Endothelial cell of umbilical vein (primary cell): ENCODE measurements at regions of chr4 and their contacts with region 1.

Region 1: DNA sequence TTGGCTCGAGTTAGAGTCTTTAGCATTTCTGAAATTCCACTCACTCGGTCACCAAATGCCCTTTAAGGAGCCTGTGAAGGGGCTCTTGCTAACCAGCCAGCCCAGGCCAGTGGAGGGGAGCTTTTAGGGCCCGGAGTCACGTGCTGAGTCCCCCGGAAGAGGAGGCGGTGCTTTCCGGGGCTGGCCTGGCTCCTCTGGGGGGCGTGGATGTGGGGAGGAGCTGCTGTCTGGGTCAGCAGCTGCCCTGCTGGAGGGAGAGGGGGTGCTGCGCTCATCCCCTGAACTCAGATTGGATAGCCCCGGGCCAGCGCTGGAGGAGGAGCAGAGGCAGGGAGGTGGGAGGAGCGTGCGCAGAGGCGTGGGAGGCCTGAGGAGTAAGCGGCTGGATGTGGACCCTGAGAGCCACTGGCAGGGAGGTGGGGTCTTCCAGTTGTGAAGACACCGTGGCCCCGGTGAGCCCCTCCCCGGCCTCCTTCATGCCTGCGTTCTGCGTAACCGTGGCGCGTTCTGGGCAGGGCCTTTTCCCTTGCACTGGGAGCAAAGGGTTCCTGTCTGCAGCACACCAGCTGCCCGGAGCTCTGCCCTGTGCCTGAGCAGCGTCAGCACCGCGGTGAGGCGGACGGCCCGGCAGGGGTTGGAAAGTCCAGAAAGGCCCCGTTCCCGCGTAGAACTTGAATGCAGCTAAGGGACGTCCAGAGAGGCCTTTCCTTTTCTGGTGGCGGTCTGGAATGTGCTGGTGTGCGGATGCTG is 19.7 kb downstream of the MAEA start:
- DNase-seq: peak; percentile 82
- H3K4me3 ChIP-seq: peak overlapping the region in 1 of 3 experiments; percentile 42
- H3K27ac ChIP-seq: no peak overlapping the region
- H3K4me1 ChIP-seq: peaks cover 11% of the 10 kb centered on the region
- H3K27me3 ChIP-seq: no peaks in the 10 kb centered on the region
- CTCF ChIP-seq: no peak
- POLR2A ChIP-seq: no peak

Region 2: DNA sequence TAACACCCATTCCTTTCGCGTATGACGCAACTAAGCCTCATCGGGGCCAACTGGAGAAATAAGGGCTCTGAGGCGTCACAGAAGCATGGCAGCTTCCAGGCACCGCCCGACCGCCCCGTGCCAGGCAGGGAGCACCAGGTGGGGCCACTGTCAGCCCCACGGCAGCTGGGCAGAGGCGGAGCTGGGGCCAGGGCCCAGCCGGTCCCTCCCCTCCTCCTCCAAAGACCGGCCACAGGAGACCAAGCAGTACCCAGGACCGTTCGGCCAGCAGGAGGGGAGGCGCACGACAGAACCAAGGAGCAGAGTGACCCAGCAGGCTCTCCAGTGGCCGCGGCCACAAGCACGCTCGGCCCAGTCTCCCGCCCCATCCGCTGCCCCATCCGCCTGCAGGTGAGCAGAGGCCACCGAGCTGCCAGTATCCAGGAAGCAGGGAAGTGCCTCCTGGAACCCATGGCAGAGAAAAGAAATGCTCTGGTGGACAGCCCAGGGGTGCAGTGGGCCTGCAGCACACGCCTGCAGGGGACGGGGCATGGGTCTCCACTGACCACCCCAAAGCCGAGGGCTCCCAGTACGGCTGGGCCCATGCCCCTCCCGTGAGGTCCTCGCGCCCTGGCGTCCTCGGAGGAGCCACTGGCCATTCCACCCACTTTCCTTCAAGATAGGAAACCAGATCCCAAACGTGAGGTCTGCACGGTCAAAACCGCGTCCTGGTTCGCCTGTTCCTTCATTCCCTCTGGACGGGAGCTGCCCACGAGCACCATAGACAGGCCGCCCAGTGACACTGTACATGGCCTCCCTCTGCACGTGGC is 70.1 kb before region 1 on chr4:
- CTCF ChIA-PET with region 1: no interaction called
- POLR2A ChIA-PET with region 1: no interaction called
- dilution Hi-C with region 1: no loop called
- intact Hi-C with region 1: loop called (anchors 5 kb)
- DNase-seq: no peak
- H3K4me3 ChIP-seq: no peak overlapping the region
- H3K27ac ChIP-seq: no peak overlapping the region
- H3K4me1 ChIP-seq: peaks cover 5% of the 10 kb centered on the region
- H3K27me3 ChIP-seq: no peaks in the 10 kb centered on the region
- CTCF ChIP-seq: no peak
- POLR2A ChIP-seq: no peak